Mammary epithelial cell (primary cell): ENCODE measurements at regions of chr1 and their contacts with region 1.

Region 1: DNA sequence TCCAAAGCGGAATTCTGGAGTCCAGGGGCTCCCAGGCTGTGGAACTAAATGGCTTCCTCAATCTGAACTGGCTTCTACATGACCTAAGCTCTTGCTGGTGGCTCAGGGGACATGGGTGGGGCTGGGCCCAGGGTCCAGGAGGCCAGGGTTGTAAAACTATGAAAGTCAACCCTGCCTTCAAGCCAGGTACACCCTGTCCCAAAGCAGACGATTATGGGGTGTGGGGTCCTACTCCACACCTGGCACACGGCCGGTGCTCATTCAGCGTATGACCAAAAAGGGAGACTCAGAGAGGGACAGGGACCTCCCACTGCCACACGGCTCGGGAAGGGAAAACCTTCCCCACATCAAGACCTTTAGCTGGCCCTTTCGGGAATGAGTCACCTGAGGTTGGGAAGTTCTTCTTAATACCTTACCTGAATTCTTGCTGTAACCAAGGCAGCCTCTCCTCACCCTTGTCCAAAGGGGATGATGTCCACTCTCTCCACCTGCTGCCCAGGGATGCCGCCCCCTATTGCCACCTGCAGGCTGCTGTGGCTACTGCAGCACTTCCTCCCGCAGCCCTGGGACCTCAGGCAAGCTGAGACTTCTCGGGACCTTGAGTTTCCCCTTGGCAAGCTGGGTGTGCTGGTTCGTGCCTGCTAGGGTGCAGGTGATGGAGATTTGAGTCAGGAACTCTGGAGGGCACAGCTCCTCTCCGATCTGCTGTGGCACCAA is 32.2 kb downstream of the RUNX3 start:
- DNase-seq: peak; percentile 32
- H3K4me3 ChIP-seq: no peak overlapping the region
- H3K27ac ChIP-seq: no peak overlapping the region
- H3K4me1 ChIP-seq: no peaks in the 10 kb centered on the region
- H3K27me3 ChIP-seq: no peaks in the 10 kb centered on the region
- CTCF ChIP-seq: peak; percentile 84 to 91

Region 2: DNA sequence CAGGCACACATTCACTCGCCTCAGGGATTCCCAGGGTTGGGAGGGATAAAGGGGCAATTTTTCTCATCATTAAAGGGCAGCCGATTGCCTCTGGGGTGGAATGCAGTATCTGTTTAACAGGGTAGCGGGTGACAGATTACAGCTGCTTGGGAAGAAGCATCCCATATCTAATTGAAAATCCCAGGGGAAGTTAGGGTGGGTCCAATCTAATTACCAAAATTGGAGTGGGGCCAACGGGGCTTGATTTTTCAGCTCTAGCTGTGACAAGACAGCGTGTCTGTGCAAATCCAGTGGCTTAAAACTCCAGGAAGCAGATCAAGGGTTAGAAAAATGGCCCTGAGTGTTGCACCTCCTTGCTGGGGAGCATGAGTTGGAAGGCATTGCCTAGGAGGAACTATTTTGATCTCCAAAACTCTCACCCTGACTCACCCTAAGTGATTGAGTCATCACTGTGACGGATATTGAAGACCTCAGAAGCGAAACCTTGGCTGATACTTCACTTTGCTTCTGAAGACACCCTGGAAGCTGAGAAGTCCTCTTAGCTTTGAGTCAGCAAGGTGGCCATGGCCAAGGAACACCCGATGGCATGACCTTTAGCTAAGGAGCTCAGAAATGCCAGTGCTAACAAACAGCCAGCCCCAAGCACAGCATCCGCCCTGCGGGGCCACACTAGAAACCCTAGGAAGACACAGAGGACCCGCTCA is 532.8 kb before region 1 on chr1:
- CTCF ChIA-PET with region 1: no interaction called
- dilution Hi-C with region 1: no loop called
- in situ Hi-C with region 1: no loop called
- intact Hi-C with region 1: no loop called
- DNase-seq: peak; percentile 99
- H3K4me3 ChIP-seq: no peak overlapping the region
- H3K27ac ChIP-seq: peak overlapping the region; percentile 89
- H3K4me1 ChIP-seq: peaks cover 38% of the 10 kb centered on the region
- H3K27me3 ChIP-seq: no peaks in the 10 kb centered on the region
- CTCF ChIP-seq: no peak

Region 3: GRCh38 chr1:24847995-24848881 is 49.7 kb before region 1 on chr1:
- CTCF ChIA-PET with region 1: no interaction called
- dilution Hi-C with region 1: no loop called
- in situ Hi-C with region 1: no loop called
- intact Hi-C with region 1: loop called (anchors 2 kb)
- DNase-seq: peak; percentile 54
- H3K4me3 ChIP-seq: peak overlapping the region; percentile 23 to 41 (median 41)
- H3K27ac ChIP-seq: no peak overlapping the region
- H3K4me1 ChIP-seq: peaks cover 11% of the 10 kb centered on the region
- H3K27me3 ChIP-seq: no peaks in the 10 kb centered on the region
- CTCF ChIP-seq: peak; percentile 58 to 95

Region 4: GRCh38 chr1:24861821-24862727 is 35.9 kb before region 1 on chr1:
- CTCF ChIA-PET with region 1: no interaction called
- dilution Hi-C with region 1: loop called (anchors 5 kb)
- in situ Hi-C with region 1: no loop called
- intact Hi-C with region 1: no loop called
- DNase-seq: no peak
- H3K4me3 ChIP-seq: no peak overlapping the region
- H3K27ac ChIP-seq: no peak overlapping the region
- H3K4me1 ChIP-seq: no peaks in the 10 kb centered on the region
- H3K27me3 ChIP-seq: no peaks in the 10 kb centered on the region
- CTCF ChIP-seq: no peak